ENCODE measurements at regions of chr20 and their contacts with region 1.

Region 1: GRCh38 chr20:39049684-39050554 is 87.8 kb downstream of the DHX35 start:
- DNase-seq: peak; percentile 43
- H3K4me3 ChIP-seq: peak overlapping the region; percentile 42 to 69 (median 63)
- H3K27ac ChIP-seq: no peak overlapping the region
- H3K4me1 ChIP-seq: peaks cover 8% of the 10 kb centered on the region
- H3K27me3 ChIP-seq: no peaks in the 10 kb centered on the region
- CTCF ChIP-seq: peak; percentile 83 to 97

Region 2: DNA sequence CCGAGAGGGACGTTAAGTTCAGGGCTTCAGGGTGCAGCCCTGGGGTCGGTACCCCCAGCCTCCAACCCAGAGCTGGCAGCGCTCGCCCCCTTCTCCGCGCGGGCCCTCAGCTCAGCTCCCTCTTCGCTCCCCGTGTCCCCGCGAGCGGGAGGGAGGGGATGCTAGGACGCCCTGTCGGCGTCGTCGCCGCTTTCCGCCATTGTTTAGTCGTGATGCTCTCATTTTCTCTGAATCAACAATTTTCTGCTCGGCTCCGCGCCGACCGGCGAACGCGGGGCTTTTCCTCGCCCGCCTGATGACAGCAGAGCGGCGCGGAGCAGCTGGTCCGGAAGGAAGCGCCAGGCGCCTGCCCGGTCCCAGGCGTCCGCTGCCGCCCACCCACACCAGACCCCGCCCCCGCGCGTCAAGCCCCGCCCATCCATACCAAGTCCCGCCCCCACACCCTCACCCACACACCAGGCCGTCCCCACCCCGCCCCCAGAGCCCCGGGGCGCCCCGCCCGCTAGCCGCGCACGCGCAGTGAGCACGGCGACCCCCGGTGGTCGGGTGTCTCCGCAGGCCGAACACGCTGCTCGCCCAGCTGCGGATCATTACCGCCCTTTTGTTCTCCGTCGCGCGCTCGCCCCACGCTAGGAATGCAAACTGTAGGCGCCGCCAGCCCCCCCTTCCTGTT is 375.7 kb before region 1 on chr20:
- CTCF ChIA-PET with region 1: no interaction called
- dilution Hi-C with region 1: no loop called
- in situ Hi-C with region 1: loop called in 1 of 2 experiments (anchors 25 kb)
- intact Hi-C with region 1: no loop called
- DNase-seq: peak; percentile 23
- H3K4me3 ChIP-seq: peak overlapping the region; percentile 57 to 69 (median 60)
- H3K27ac ChIP-seq: no peak overlapping the region
- H3K4me1 ChIP-seq: peaks cover 9% of the 10 kb centered on the region
- H3K27me3 ChIP-seq: no peaks in the 10 kb centered on the region
- CTCF ChIP-seq: no peak

Region 3: GRCh38 chr20:38748097-38748860 is 301.6 kb before region 1 on chr20 and contains the start of gene ACTR5:
- CTCF ChIA-PET with region 1: no interaction called
- dilution Hi-C with region 1: no loop called
- in situ Hi-C with region 1: no loop called
- intact Hi-C with region 1: loop called (anchors 10 kb)
- DNase-seq: peak; percentile 86
- H3K4me3 ChIP-seq: peak within 1 kb of the TSS; percentile 79 to 98 (median 92)
- H3K27ac ChIP-seq: peak within 1 kb of the TSS; percentile 71
- H3K4me1 ChIP-seq: peaks cover 5% of the 10 kb centered on the region
- H3K27me3 ChIP-seq: no peaks in the 10 kb centered on the region
- CTCF ChIP-seq: no peak
- total RNA-seq, gene ACTR5: 6.5 to 6.8 TPM

Region 4: GRCh38 chr20:38770546-38770945 is 279.4 kb before region 1 on chr20:
- CTCF ChIA-PET with region 1: no interaction called
- dilution Hi-C with region 1: no loop called
- in situ Hi-C with region 1: no loop called
- intact Hi-C with region 1: no loop called
- DNase-seq: no peak
- H3K4me3 ChIP-seq: no peak overlapping the region
- H3K27ac ChIP-seq: no peak overlapping the region
- H3K4me1 ChIP-seq: no peaks in the 10 kb centered on the region
- H3K27me3 ChIP-seq: no peaks in the 10 kb centered on the region
- CTCF ChIP-seq: no peak

Region 5: DNA sequence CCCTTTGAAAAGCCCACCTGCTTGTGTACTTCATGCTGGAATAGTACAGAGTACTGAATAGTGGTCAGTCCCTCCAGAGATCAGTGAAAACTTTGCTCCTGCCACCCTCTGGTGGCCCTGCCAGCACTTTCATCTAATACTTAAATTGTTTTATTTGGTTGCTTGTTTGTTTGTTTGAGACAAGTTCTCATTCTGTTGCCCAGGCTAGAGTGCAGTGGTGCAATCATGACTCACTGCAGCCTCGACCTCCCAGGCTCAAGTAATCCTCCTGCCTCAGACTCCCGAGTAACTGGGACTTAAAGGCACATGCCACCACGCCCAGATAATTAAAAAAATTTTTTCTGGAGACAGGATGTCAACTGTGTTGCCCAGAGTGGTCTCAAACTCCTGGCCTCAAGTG is 114.6 kb before region 1 on chr20:
- CTCF ChIA-PET with region 1: interaction called, 3 read pairs
- dilution Hi-C with region 1: no loop called
- in situ Hi-C with region 1: loop called in 1 of 2 experiments (anchors 10 kb)
- intact Hi-C with region 1: no loop called
- DNase-seq: peak; percentile 9
- H3K4me3 ChIP-seq: no peak overlapping the region
- H3K27ac ChIP-seq: no peak overlapping the region
- H3K4me1 ChIP-seq: peaks cover 23% of the 10 kb centered on the region
- H3K27me3 ChIP-seq: no peaks in the 10 kb centered on the region
- CTCF ChIP-seq: peak; percentile 22 to 29

Region 6: GRCh38 chr20:39036011-39036410 is 13.9 kb before region 1 on chr20:
- CTCF ChIA-PET with region 1: no interaction called
- dilution Hi-C with region 1: no loop called
- in situ Hi-C with region 1: no loop called
- intact Hi-C with region 1: no loop called
- DNase-seq: no peak
- H3K4me3 ChIP-seq: no peak overlapping the region
- H3K27ac ChIP-seq: no peak overlapping the region
- H3K4me1 ChIP-seq: no peaks in the 10 kb centered on the region
- H3K27me3 ChIP-seq: no peaks in the 10 kb centered on the region
- CTCF ChIP-seq: no peak

Region 7: GRCh38 chr20:39081255-39081654 is 31.3 kb after region 1 on chr20:
- CTCF ChIA-PET with region 1: interaction called, 5 read pairs
- dilution Hi-C with region 1: no loop called
- in situ Hi-C with region 1: no loop called
- intact Hi-C with region 1: loop called (anchors 1 kb)
- DNase-seq: peak; percentile 56
- H3K4me3 ChIP-seq: no peak overlapping the region
- H3K27ac ChIP-seq: no peak overlapping the region
- H3K4me1 ChIP-seq: no peaks in the 10 kb centered on the region
- H3K27me3 ChIP-seq: peaks cover 2% of the 10 kb centered on the region
- CTCF ChIP-seq: peak; percentile 94 to 95